ENCODE measurements at regions of chr18 and their contacts with region 1.

Region 1: GRCh38 chr18:50194631-50195532 is at the start of gene MYO5B:
- DNase-seq: peak; percentile 17
- H3K4me3 Mint-ChIP-seq: peak within 1 kb of the TSS; percentile 13
- H3K27ac Mint-ChIP-seq: no peak within 1 kb of the TSS
- H3K4me1 Mint-ChIP-seq: no peaks in the 10 kb centered on the region
- H3K27me3 Mint-ChIP-seq: peaks cover 64% of the 10 kb centered on the region
- total RNA-seq, gene MYO5B: not detected in 2 replicates

Region 2: DNA sequence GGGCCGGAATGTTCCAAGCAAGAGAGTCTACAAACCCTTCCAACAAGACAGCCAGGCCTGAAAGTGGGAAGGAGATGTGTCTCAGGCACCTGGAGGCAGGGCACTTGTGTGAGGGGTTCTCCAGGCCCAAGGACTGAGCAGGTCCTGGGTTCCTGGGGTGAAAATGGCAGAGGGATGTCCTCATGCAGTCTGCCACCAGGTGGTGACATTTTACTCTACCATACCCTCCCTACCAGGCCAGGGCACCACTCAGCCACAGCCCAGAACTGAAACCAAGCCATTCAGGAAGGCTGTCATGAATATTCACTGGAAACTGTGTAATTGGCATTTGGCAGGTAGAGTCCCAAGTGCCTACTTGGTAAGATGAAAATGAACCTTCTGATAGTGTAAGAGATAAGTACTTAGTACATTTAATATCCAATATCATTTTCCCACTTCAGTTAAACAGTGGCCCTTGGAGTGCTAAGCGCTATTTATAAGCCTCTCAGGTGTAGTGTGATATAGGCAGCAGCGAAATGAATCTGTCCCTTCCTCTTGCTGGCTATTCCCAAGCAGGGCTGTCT is 185.0 kb before region 1 on chr18:
- intact Hi-C with region 1: loop called (anchors 5 kb)
- DNase-seq: peak; percentile 24
- H3K4me3 Mint-ChIP-seq: no peak overlapping the region
- H3K27ac Mint-ChIP-seq: no peak overlapping the region
- H3K4me1 Mint-ChIP-seq: no peaks in the 10 kb centered on the region
- H3K27me3 Mint-ChIP-seq: peaks cover 7% of the 10 kb centered on the region

Measured in activated T-helper 2 cell treated with anti-CD3 and anti-CD28 coated beads, Interferon-gamma antibody, Interleukin-2, Interleukin-4, amounts not matched to agents 10 μg/mL and 5 μg/mL and 100 μg/mL, durations not matched to agents 14 hours and 24 hours and 36 hours (primary cell).